ENCODE measurements at regions of chr7 and their contacts with region 1.

Region 1: GRCh38 chr7:94436018-94436604 is 41.4 kb downstream of the COL1A2 start:
- DNase-seq: peak; percentile 73
- H3K4me3 ChIP-seq: no peak overlapping the region
- H3K27ac ChIP-seq: no peak overlapping the region
- H3K27me3 ChIP-seq: no peaks in the 10 kb centered on the region
- CTCF ChIP-seq: peak; percentile 87

Region 2: DNA sequence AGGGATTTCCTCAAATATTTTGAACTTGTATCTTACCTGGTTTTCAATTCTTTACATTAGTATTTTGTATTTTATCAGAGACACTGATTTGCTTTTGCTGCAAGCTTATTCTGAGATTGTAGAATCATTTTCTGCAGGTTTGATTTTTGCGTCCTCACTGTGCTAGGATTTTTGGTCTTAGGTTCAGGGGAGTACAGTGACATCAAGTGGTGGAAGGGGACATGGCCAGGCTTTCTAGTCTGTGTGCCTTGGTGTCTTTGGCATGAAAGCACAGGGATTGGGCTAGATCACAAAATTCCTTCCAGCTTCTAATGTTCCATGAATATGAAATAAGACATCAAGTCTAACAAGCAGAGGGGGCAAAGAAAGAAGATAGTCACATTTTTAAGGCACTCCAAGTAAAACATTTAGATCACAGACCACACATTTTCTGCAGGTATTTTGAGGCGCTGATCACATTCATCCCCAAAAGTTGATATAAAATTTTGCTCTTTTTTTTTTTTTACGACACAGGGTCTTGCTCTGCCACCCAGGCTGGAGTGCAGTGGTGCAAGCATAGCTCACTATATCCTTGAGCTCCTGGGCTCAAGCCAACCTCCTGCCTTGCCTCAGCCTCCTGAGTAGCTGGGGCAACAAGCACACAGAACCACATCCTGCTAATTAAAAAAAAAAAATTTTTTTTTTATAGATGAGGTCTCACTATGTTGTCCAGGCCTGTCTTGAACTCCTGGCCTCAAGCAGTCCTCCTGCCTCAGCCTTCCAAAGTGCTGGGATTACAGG is 763.9 kb after region 1 on chr7:
- in situ Hi-C with region 1: loop called (anchors 25 kb)
- DNase-seq: peak; percentile 47
- H3K4me3 ChIP-seq: no peak overlapping the region
- H3K27ac ChIP-seq: no peak overlapping the region
- H3K27me3 ChIP-seq: no peaks in the 10 kb centered on the region
- CTCF ChIP-seq: peak; percentile 90

Region 3: DNA sequence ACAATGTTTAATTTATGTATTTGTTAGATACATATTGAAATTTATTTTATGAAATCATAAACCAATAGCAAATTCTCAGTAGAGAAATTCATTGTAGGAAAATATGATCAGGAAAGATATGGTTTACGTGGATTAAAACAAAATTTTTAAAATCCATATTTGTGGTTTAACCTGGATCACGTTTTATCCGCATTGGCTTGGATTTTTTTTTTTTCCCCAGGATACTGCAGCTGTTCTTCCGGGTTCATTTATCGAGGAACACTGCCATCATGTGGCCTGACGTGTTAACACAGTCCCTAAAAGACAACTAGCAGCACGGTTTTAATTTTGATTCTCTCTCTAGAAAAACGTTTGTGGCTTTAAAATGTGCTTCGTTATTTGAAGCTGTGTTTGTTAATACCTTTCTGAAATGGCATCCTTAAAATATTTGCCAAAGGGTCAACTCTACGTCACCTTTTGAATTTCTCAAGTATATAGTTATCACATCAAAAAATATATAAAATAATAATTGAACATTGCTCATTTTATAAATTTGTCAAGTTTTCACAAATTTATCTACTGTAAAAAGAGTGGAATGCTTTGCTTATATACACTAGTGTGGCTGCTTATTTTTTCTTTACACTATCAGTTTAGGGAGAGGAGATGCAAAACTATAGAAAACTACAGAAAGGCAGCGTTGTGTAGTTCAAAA is 1040.9 kb after region 1 on chr7:
- in situ Hi-C with region 1: loop called (anchors 25 kb)
- DNase-seq: peak; percentile 71
- H3K4me3 ChIP-seq: no peak overlapping the region
- H3K27ac ChIP-seq: no peak overlapping the region
- H3K27me3 ChIP-seq: no peaks in the 10 kb centered on the region
- CTCF ChIP-seq: peak; percentile 76

Measured in brain microvascular endothelial cell (primary cell).